ENCODE measurements at regions of chr7 and their contacts with region 1.

Region 1: DNA sequence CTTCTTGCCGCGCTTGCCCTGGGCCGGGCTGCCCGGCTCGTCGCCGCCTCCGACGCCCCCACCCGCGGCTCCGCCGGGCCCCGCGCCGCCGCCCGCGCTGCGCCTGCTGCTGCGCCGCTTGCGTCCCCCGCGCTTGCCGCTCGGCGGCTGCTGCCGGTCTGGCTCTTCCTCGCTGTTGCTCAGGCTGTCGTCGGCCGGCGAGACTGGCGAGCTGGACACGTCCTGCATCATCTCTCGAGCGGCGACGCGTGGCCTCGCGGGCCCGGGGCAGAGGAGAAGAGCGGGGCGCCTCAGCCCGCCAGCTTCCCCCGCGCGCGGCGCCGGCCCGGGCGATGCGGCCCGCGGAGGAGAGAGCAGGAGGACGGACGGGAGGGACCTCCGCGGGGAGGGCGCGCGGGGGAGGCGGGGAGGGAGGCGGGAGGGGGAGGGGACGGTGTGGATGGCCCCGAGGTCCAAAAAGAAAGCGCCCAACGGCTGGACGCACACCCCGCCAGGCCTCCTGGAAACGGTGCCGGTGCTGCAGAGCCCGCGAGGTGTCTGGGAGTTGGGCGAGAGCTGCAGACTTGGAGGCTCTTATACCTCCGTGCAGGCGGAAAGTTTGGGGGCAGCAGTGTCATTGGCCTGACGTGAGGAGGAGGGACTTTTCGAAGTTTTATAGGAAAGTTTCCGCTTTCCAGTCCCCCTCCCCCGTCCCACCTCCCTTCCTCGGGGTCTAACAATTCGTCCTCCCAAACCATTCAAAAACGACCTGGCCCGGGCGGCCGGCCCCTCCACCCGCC is at the start of gene TWIST1:
- DNase-seq: peak; percentile 96
- H3K4me3 ChIP-seq: peak within 1 kb of the TSS; percentile 92 to 100
- H3K27ac ChIP-seq: peak within 1 kb of the TSS; percentile 96 to 100
- H3K4me1 ChIP-seq: peaks cover 7 to 32% of the 10 kb centered on the region in 2 experiments; a peak in 3 of 4 replicates
- H3K27me3 ChIP-seq: no peaks in the 10 kb centered on the region
- CTCF ChIP-seq: no peak
- EP300 ChIP-seq: peak; percentile 69 to 79; a peak in 3 of 4 replicates
- RAD21 ChIP-seq: peak; percentile 18; the same call in 1 of the 2 replicates
- polyA plus RNA-seq, gene TWIST1: 162 and 170 TPM in 2 replicates

Region 2: DNA sequence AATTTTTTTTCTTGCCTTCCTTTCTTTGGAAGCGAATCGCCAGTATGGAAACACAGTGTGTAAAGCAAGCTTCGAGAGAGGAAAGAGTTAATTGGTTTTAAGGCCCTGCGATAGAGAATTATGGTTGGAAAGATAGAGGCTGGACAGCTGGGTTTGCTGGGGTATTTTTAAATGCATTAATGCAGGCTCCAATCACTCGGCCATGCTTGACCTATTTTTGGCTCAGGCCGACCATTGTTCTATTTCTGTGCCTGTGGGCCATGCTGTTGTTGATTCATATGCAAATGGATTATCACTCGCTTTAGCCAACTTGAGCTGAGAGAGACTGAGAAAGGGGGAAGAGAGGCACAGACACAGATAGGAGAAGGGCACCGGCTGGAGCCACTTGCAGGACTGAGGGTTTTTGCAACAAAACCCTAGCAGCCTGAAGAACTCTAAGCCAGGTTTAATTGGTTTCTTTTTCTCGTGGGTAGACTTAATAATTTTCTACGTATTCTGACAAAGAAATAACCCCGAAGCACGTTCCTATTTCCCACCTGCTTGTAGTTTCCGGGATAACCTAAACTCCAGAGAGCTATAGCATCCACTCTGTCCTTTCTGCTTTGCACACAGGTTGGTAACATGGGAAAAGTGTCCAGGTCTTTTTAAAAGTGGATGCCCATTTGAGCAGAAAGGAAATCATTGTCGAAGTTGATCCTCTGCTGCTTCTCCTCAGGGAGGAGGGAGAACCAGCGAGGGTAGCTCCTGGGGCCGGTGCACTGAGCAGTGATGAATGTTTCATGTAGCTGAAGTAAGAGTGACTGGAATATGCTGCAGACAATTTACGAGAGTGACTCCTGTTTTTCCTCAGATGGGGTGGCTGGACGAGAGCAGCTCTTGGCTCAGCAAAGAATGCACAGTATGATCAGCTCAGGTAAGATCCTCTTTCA is 621.6 kb before region 1 on chr7 and contains the start of gene HDAC9:
- CTCF ChIA-PET with region 1: interaction called, 3 read pairs
- POLR2A ChIA-PET with region 1: interaction called, 17 read pairs
- DNase-seq: peak; percentile 49
- H3K4me3 ChIP-seq: peak within 1 kb of the TSS; percentile 63 to 67
- H3K27ac ChIP-seq: peak within 1 kb of the TSS; percentile 80 to 100
- H3K4me1 ChIP-seq: peaks cover 8 to 53% of the 10 kb centered on the region in 2 experiments; a peak in 3 of 4 replicates
- H3K27me3 ChIP-seq: no peaks in the 10 kb centered on the region
- CTCF ChIP-seq: no peak
- EP300 ChIP-seq: peak; percentile 62 to 93; a peak in 2 of 4 replicates
- RAD21 ChIP-seq: peak; percentile 43
- polyA plus RNA-seq, gene HDAC9: 11.6 and 19.8 TPM in 2 replicates

Region 3: DNA sequence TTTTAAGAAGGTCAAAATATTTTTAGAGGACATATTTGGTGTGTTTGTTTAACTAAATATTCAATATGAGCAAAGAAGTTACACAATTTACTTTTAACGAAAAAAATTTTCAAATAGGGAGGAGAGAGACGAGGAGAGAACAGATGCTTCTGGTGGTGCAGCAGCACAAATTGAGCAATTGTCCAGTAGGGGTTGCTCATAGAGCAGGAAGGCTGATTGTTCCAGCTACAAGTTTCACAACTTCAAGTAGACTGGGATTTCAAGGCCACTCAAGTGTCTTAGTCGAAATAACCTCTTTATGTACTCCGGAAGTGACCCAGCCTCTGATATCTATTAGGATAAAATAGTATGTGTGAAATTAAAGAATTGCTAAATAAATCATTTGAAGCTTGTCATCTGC is 423.9 kb before region 1 on chr7:
- CTCF ChIA-PET with region 1: interaction called, 80 read pairs
- POLR2A ChIA-PET with region 1: interaction called, 26 read pairs
- DNase-seq: peak; percentile 25
- H3K4me3 ChIP-seq: no peak overlapping the region
- H3K27ac ChIP-seq: peak overlapping the region in 1 of 2 experiments; percentile 95; a peak in 2 of 4 replicates
- H3K4me1 ChIP-seq: peaks cover 0 to 45% of the 10 kb centered on the region in 2 experiments; a peak in 3 of 4 replicates
- H3K27me3 ChIP-seq: no peaks in the 10 kb centered on the region
- CTCF ChIP-seq: peak; percentile 97
- EP300 ChIP-seq: peak in 1 of 2 experiments; percentile 46; a peak in 1 of 4 replicates
- RAD21 ChIP-seq: peak; percentile 99

Region 4: DNA sequence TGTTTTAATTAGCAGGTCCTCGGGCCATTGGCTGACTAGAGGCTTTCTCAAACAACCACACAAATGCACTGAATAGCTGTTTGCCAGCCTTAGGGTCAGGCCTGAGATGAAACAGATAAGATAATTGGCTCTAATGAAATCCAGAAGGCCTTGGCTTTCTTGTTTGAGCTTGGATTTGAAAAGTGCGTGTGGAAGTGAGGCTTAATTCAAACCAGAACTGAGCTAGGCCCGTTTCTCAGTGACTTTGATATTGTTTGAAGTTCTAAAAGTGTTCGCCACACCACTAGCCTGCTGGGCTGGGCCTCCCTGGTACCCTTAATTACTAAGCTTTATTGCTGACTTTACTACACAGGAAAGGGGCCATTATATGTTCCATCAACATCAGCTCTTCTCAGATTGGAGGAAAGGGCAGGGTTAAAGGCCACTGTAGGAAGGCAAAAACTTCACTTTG is 270.5 kb before region 1 on chr7:
- CTCF ChIA-PET with region 1: interaction called, 14 read pairs
- POLR2A ChIA-PET with region 1: interaction called, 22 read pairs
- DNase-seq: peak; percentile 75
- H3K4me3 ChIP-seq: no peak overlapping the region
- H3K27ac ChIP-seq: peak overlapping the region; percentile 60 to 100; a peak in 3 of 4 replicates
- H3K4me1 ChIP-seq: peaks cover 23 to 52% of the 10 kb centered on the region in 2 experiments
- H3K27me3 ChIP-seq: no peaks in the 10 kb centered on the region
- CTCF ChIP-seq: no peak
- EP300 ChIP-seq: peak; percentile 96 to 100
- RAD21 ChIP-seq: peak; percentile 60

Region 5: GRCh38 chr7:19101909-19102308 is 15.4 kb before region 1 on chr7:
- CTCF ChIA-PET with region 1: interaction called, 92 read pairs
- POLR2A ChIA-PET with region 1: interaction called, 151 read pairs
- DNase-seq: no peak
- H3K4me3 ChIP-seq: peak overlapping the region; percentile 25 to 49; a peak in 3 of 4 replicates
- H3K27ac ChIP-seq: peak overlapping the region; percentile 79 to 96
- H3K4me1 ChIP-seq: peaks cover 9 to 92% of the 10 kb centered on the region in 2 experiments; a peak in 3 of 4 replicates
- H3K27me3 ChIP-seq: no peaks in the 10 kb centered on the region
- CTCF ChIP-seq: no peak
- EP300 ChIP-seq: no peak
- RAD21 ChIP-seq: no peak; the same call in 1 of the 2 replicates

Region 6: DNA sequence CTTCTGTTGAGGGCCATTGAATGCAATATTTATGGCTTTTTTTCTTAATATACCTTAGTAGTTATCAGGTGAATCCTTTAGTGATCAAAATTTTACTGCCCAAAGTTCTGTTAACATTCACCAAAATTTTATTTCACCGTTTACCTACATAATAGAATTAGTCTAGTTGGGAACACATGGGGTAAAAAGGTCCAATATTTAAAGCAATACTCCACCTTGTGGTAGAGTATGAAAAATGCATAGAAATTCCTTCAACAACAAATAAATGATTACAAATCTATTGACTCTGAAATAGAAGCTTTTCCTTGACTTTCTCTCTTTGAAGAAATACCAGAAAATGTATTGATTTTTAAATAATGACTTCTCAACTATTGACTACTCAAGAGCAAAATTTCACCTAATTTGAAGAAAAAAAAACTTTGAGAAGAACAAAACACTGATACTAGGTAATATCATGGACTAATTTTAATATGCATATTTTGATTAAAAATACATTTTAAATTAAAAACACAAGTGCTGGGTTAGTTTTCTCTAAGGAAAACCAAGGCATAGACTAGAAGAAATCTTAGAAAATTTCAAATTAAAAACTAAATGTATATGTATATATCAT is 548.2 kb after region 1 on chr7:
- CTCF ChIA-PET with region 1: interaction called, 22 read pairs
- POLR2A ChIA-PET with region 1: no interaction called
- DNase-seq: peak; percentile 39
- H3K4me3 ChIP-seq: no peak overlapping the region
- H3K27ac ChIP-seq: no peak overlapping the region
- H3K4me1 ChIP-seq: peaks cover 0 to 3% of the 10 kb centered on the region in 2 experiments; a peak in 2 of 4 replicates
- H3K27me3 ChIP-seq: no peaks in the 10 kb centered on the region; the same call in 1 of the 2 replicates
- CTCF ChIP-seq: peak; percentile 93
- EP300 ChIP-seq: no peak
- RAD21 ChIP-seq: peak; percentile 82